PC-3 (cell line): ENCODE measurements at regions of chr21 and their contacts with region 1.

Region 1: DNA sequence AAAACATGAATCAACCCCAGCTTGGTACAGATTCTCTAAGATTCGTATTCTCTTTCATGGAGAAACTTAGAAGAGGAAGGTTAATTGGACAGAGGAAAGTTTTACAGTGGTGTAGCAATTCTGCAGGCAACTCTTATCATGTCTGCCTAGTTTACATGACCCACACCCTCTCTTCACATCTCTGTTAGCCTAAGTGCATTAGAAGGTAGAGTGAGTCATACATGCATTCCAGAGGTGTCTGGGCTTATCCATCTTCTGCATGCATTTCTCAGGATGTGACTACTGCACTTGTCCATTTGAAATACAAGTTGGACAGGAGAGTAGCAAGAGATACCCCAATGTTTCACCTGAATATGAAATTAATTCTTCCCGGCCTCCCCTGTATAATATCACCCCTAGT is 578.4 kb upstream of the NCAM2 start:
- DNase-seq: no peak
- ATAC-seq: no peak
- H3K4me3 ChIP-seq: no peak overlapping the region
- H3K27ac ChIP-seq: no peak overlapping the region
- H3K4me1 ChIP-seq: no peaks in the 10 kb centered on the region
- H3K27me3 ChIP-seq: no peaks in the 10 kb centered on the region
- CTCF ChIP-seq: no peak

Region 2: GRCh38 chr21:20353351-20353750 is 66.4 kb before region 1 on chr21:
- CTCF ChIA-PET with region 1: no interaction called
- POLR2A ChIA-PET with region 1: interaction called, 11 read pairs
- intact Hi-C with region 1: no loop called
- DNase-seq: peak; percentile 62
- ATAC-seq: peak; percentile 81
- H3K4me3 ChIP-seq: no peak overlapping the region
- H3K27ac ChIP-seq: no peak overlapping the region; the same call in 1 of the 2 replicates
- H3K4me1 ChIP-seq: no peaks in the 10 kb centered on the region
- H3K27me3 ChIP-seq: no peaks in the 10 kb centered on the region
- CTCF ChIP-seq: no peak